ENCODE measurements at regions of chr10 and their contacts with region 1.

Region 1: GRCh38 chr10:79068562-79069324 is at the start of gene ZMIZ1:
- DNase-seq: peak; percentile 87 to 93
- ATAC-seq: peak in 7 of 8 donors; percentile 18 to 57 (median 36)
- H3K4me3 ChIP-seq: peak within 1 kb of the TSS; percentile 71 to 98 (median 92)
- H3K27ac ChIP-seq: peak within 1 kb of the TSS; percentile 97 to 100 (median 99)
- H3K4me1 ChIP-seq: peaks cover 21 to 51% (median 37%) of the 10 kb centered on the region in 9 donors
- H3K27me3 ChIP-seq: no peaks in the 10 kb centered on the region
- CTCF ChIP-seq: peak in 5 of 9 donors; percentile 6 to 54 (median 37)
- total RNA-seq, gene ZMIZ1: 40.4 to 61.5 (median 50.8) TPM

Region 2: DNA sequence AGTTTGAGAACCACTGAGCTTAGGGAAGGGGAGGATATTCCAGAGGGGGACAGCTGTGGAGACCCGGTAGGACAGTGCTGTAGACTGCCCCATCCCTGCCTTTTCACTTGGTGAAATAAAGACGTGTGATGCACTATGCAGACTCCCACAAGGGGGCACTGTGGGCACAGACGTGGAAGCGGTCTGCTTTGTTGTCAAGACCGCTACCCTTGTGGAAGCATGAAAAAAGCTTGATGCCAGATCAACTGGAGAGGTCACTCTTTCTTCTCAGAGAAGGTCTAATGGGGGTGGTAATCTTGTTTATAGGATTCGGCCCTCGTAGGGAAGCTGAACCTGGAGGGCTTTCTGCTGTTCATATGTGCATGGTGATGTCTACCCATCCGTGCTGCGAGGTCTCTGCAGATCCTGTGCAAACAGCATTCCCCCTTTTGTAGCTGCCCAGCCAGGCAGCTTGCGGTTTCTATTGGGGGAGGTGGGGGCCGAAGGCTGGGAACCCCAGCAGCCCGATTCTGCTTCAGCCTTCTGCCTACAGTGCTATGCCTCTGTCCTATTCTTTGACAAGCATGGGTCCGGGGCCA is 1021.3 kb before region 1 on chr10:
- intact Hi-C with region 1: loop called in 4 of 10 experiments (anchors 5 to 10 kb)
- DNase-seq: peak; percentile 85 to 87
- ATAC-seq: peak; percentile 72 to 91 (median 87)
- H3K4me3 ChIP-seq: no peak overlapping the region
- H3K27ac ChIP-seq: no peak overlapping the region
- H3K4me1 ChIP-seq: peaks cover 0 to 19% (median 12%) of the 10 kb centered on the region in 9 donors
- H3K27me3 ChIP-seq: no peaks in the 10 kb centered on the region
- CTCF ChIP-seq: peak; percentile 80 to 93 (median 90)

Region 3: DNA sequence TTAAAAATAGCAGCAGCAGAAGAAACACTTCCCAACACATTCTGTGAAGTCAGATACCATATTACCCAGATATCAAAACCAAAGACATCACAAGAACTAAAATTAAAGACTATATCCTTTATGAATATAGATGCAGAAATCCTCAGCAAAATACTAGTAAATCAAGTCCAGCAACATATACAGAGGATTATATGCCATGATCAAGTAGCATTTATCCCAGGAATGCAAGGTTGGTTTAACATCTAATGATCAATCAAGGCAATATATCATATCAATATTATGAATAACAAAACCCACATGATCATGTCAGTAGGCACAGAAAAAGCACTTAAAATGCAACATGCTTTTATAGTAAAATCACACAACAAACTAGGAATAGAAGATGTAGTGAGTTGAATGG is 946.9 kb before region 1 on chr10:
- intact Hi-C with region 1: no loop called
- DNase-seq: no peak
- ATAC-seq: no peak
- H3K4me3 ChIP-seq: no peak overlapping the region
- H3K27ac ChIP-seq: no peak overlapping the region
- H3K4me1 ChIP-seq: no peaks in the 10 kb centered on the region
- H3K27me3 ChIP-seq: peaks cover 0 to 13% (median 0%) of the 10 kb centered on the region in 7 donors
- CTCF ChIP-seq: no peak

Region 4: DNA sequence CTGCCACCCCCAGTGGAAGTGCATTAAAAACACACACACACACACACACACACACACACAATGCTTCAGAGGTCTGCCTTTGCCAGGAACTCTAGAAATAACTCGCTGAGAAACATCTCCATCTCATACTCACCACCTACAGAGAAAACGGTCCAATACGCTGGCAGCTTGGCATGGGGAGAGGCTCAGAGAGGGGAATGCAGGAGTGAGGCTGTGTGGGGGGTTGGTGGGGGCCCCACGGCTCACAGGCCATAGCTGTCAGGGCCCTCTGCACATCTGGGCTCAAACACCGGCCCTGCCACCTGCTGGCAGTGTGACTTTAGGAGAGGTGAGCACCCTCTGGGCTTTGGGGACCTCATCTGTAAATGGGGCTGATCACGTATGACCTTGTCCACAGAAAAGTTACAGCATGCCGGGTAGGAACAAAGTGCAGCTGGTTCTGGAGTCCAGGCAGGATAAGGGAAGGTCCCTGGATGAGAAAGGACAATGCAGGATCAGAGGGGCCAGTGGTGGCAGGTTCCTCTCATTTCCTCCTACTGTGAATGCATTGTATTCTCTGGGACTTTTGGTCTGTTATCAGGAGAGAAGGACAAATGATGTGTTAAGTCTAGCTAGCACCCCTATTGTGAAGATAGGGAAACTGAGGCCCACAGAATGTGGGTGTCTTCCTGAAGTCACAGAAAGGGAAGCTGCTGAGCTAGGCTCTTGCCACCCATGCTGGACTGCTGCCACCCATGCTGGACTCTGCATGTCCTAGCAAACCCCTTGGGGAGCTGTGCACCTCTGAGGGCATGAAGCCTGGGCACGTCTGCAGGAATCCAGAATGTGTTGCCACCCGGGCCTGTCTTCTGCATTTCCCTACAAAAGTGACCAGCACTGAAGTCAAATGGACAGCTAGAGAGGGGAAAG is 630.5 kb before region 1 on chr10:
- intact Hi-C with region 1: loop called in 1 of 10 experiments (anchors 10 kb)
- DNase-seq: no peak
- ATAC-seq: peak in 4 of 8 donors; percentile 7 to 46 (median 19)
- H3K4me3 ChIP-seq: no peak overlapping the region
- H3K27ac ChIP-seq: no peak overlapping the region
- H3K4me1 ChIP-seq: peaks cover 11 to 39% (median 25%) of the 10 kb centered on the region in 9 donors
- H3K27me3 ChIP-seq: no peaks in the 10 kb centered on the region
- CTCF ChIP-seq: peak in 4 of 9 donors; percentile 9 to 34 (median 26)

Region 5: DNA sequence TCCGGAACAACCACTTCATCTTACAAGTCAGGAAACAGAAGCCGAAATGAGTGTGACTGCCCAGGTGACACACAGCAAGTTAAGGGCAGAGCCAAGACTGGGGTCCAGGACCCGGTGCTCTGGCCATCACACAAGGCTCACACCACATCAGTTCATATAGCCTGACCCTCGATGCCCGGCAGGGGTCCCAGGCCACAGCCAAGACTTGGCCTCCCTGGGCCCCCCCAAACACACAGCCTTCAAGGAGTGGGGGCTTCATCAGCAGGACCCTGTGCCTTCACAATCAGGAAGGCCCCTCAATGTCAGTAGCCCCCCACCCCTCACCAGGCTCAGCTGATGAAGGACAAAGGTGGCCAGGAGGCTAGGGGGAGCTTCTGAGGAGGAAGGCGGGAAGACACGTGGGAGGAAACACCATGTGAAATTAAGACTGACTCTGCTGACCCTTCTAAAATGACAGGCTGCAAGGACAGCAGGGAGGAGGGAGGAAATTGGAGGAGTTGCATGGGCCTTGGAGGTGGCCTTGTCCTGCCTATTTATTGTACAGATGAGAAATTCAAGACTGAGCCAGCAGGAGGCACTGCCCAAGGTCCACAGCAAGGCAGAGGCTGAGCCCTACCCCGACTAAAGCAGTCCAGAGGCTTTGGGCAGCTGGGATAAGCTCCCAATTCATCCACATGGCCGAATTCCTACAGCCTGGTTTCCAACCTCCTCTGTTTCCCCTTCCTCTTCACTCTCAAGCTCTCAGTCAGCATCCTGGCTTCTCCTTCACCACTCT is 216.1 kb before region 1 on chr10:
- intact Hi-C with region 1: loop called in 3 of 10 experiments (anchors 5 to 10 kb)
- DNase-seq: no peak
- ATAC-seq: no peak
- H3K4me3 ChIP-seq: no peak overlapping the region
- H3K27ac ChIP-seq: no peak overlapping the region
- H3K4me1 ChIP-seq: peaks cover 2 to 18% (median 7%) of the 10 kb centered on the region in 9 donors
- H3K27me3 ChIP-seq: no peaks in the 10 kb centered on the region
- CTCF ChIP-seq: peak in 7 of 9 donors; percentile 25 to 49 (median 41)

Region 6: DNA sequence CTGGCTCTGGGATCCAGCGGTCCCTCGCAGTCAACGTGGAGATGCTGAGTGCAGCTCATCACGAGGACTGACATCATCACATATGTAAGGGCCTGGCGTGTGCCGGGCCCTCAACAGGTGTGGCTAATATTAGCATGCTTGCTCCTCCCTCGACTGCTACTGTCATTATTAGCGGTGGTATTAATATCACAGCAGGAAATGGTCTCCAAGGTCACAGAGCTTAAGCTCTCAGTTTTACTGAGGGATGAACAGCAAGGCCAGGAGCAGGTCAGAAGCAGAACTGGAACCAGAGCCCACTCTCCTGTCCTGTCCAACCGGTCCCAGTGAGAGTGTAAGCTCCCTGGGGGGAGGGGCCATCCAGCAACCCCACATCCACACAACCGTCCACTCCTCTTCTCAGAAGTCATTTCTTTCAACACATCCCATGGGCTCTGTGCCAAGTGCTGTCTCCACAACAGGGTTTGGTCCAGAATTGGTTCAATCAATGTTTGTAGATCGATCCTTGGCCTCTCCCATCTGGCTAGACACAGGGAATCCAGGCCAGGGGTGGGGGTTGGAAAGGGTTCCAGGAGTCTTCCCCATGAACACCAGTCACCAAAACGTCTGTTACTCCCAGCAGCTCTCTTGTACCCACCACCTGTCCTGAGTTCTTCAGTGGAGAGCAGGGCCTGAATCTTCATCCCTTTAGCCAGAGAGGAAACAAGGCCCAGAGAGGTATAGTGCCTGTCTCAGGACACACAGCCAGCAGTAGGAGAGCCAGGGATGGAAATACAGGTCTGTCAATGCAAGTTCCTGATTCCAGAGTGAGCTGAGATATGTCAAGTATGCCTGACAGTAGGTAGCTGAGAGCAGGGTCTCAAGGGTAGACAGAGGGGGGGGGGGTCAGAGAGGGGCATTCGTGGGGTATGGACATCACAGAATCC is 45.2 kb before region 1 on chr10:
- intact Hi-C with region 1: no loop called
- DNase-seq: peak in 1 of 2 donors; percentile 64
- ATAC-seq: peak in 7 of 8 donors; percentile 25 to 83 (median 74)
- H3K4me3 ChIP-seq: peak overlapping the region in 2 of 10 donors; percentile 24 to 33
- H3K27ac ChIP-seq: peak overlapping the region in 7 of 10 donors; percentile 53 to 88 (median 71)
- H3K4me1 ChIP-seq: peaks cover 4 to 51% (median 13%) of the 10 kb centered on the region in 9 donors
- H3K27me3 ChIP-seq: no peaks in the 10 kb centered on the region
- CTCF ChIP-seq: no peak

Region 7: GRCh38 chr10:79093658-79094411 is 25.1 kb after region 1 on chr10:
- intact Hi-C with region 1: no loop called
- DNase-seq: peak in 1 of 2 donors; percentile 43
- ATAC-seq: peak; percentile 27 to 89 (median 56)
- H3K4me3 ChIP-seq: no peak overlapping the region
- H3K27ac ChIP-seq: peak overlapping the region; percentile 64 to 90 (median 82)
- H3K4me1 ChIP-seq: peaks cover 48 to 99% (median 96%) of the 10 kb centered on the region in 9 donors
- H3K27me3 ChIP-seq: no peaks in the 10 kb centered on the region
- CTCF ChIP-seq: no peak

Region 8: GRCh38 chr10:79112881-79113431 is 44.2 kb after region 1 on chr10:
- intact Hi-C with region 1: loop called in 3 of 10 experiments (anchors 5 kb)
- DNase-seq: peak; percentile 32 to 54
- ATAC-seq: peak; percentile 30 to 81 (median 60)
- H3K4me3 ChIP-seq: no peak overlapping the region
- H3K27ac ChIP-seq: peak overlapping the region; percentile 70 to 92 (median 84)
- H3K4me1 ChIP-seq: peaks cover 51 to 99% (median 96%) of the 10 kb centered on the region in 9 donors
- H3K27me3 ChIP-seq: no peaks in the 10 kb centered on the region
- CTCF ChIP-seq: no peak

Region 9: DNA sequence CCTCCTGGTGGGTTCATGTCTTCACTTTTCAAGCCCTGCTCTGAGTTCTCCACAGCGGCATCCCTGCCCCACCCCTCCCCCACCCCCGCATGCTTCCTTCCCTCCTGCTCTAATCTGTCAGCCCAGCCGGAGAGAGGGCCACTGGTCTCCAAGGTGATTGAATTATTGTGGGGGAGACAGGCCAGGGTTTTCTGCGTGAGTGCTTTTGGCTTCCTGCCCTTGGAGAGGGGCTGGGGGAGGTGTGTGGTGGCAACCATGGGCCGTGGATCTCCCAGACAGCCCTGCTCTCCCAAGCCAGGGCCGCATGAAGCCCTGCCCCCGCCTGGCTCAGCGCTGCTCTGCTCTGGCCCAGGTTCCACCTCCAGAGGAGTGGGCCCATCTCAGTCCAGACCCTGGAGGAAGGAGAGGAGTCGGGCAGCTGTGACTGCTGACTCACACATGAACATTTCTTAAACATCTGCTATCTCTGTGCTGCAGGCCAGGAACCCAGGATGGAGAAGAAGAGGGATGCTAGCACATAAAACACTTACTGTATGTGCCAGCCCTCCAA is 109.9 kb after region 1 on chr10:
- intact Hi-C with region 1: loop called in 1 of 10 experiments (anchors 10 kb)
- DNase-seq: peak in 1 of 2 donors; percentile 69
- ATAC-seq: peak; percentile 20 to 56 (median 35)
- H3K4me3 ChIP-seq: no peak overlapping the region
- H3K27ac ChIP-seq: peak overlapping the region in 9 of 10 donors; percentile 22 to 91 (median 70)
- H3K4me1 ChIP-seq: peaks cover 78 to 100% (median 97%) of the 10 kb centered on the region in 9 donors
- H3K27me3 ChIP-seq: no peaks in the 10 kb centered on the region
- CTCF ChIP-seq: no peak

Region 10: GRCh38 chr10:79562135-79562756 is 493.5 kb after region 1 on chr10:
- intact Hi-C with region 1: no loop called
- DNase-seq: peak; percentile 65 to 66
- ATAC-seq: peak; percentile 58 to 89 (median 74)
- H3K4me3 ChIP-seq: peak overlapping the region in 4 of 10 donors; percentile 2 to 26 (median 13)
- H3K27ac ChIP-seq: no peak overlapping the region
- H3K4me1 ChIP-seq: peaks cover 0 to 6% (median 0%) of the 10 kb centered on the region in 9 donors
- H3K27me3 ChIP-seq: peaks cover 0 to 16% (median 0%) of the 10 kb centered on the region in 7 donors
- CTCF ChIP-seq: peak; percentile 50 to 87 (median 81)

Measured in heart right ventricle (tissue), 16 donors.